Lower lobe of right lung (tissue), 2 donors: ENCODE measurements at regions of chr12 and their contacts with region 1.

Region 1: GRCh38 chr12:22083167-22083566 is 37.1 kb downstream of the CMAS start:
- DNase-seq: no peak
- ATAC-seq: no peak
- H3K4me3 ChIP-seq: no peak overlapping the region
- H3K27ac ChIP-seq: no peak overlapping the region
- H3K4me1 ChIP-seq: no peaks in the 10 kb centered on the region
- H3K27me3 ChIP-seq: no peaks in the 10 kb centered on the region
- CTCF ChIP-seq: peak; percentile 42

Region 2: DNA sequence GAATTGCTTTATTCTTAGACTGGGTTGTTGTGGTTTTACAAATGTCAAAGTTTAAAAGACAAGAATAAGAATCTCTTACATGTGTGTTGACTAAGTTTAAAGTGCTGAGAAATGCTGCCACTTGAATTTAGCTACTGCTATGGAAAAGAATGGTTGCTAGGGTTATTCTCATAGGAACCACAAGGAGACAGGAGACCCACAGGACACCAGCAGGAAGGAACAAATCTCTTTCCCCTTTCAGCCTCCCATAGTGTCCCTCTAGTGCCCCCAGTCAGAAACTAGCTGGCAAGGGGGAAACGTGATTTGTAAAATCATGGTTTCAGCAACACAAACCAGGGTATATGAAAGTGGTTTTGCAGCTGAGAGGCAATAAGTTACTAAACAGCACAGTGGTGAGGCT is 148.7 kb after region 1 on chr12:
- intact Hi-C with region 1: no loop called
- DNase-seq: no peak
- ATAC-seq: no peak
- H3K4me3 ChIP-seq: no peak overlapping the region
- H3K27ac ChIP-seq: no peak overlapping the region
- H3K4me1 ChIP-seq: peaks cover 6% of the 10 kb centered on the region
- H3K27me3 ChIP-seq: no peaks in the 10 kb centered on the region
- CTCF ChIP-seq: no peak

Region 3: DNA sequence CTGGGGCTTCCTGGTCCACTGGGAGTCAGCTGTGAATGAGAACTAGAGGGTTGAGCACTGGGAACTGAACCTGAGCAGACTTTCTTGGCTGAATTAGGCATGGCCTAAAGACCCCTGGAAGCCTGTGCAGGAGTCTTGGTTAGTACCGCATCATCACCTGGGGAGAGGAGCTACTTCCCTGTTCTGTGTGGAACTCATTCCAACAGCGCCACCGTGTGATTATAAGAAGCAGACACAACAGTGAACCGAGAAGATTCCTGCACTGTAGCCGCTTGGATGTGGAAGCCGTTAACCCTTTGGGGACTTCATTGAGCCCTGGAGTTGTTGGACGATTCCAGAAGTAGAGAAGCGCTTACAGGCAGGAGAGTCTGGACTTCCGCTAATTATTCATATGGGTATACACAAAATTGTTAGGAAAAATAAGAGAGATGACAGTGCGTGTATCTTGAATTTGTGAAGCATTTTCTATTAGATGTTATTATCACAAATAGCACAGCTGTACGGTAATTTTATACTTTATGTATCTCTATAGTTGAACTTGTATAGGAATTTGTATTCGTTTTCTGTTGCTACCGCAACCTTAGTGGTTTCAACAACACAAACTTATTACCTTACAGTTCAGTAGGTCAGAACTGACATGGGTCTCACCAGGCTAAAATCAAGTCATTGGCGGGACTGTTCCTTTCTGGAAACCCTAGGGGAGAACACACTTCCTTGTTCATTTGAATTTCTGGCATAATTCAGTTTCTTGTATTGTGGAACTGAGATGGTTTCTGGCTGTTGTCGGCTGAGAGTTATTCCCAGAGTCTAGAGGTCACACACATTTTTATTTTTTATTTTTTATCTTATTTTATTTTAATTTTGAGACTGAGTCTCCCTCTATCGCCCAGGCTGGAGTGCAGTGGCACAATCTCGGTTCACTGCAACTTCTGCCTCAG is 360.5 kb after region 1 on chr12:
- intact Hi-C with region 1: loop called (anchors 10 kb)
- DNase-seq: peak; percentile 45
- ATAC-seq: peak; percentile 96
- H3K4me3 ChIP-seq: no peak overlapping the region
- H3K27ac ChIP-seq: no peak overlapping the region
- H3K4me1 ChIP-seq: no peaks in the 10 kb centered on the region
- H3K27me3 ChIP-seq: no peaks in the 10 kb centered on the region
- CTCF ChIP-seq: peak; percentile 80